ENCODE measurements at regions of chr20 and their contacts with region 1.

Region 1: DNA sequence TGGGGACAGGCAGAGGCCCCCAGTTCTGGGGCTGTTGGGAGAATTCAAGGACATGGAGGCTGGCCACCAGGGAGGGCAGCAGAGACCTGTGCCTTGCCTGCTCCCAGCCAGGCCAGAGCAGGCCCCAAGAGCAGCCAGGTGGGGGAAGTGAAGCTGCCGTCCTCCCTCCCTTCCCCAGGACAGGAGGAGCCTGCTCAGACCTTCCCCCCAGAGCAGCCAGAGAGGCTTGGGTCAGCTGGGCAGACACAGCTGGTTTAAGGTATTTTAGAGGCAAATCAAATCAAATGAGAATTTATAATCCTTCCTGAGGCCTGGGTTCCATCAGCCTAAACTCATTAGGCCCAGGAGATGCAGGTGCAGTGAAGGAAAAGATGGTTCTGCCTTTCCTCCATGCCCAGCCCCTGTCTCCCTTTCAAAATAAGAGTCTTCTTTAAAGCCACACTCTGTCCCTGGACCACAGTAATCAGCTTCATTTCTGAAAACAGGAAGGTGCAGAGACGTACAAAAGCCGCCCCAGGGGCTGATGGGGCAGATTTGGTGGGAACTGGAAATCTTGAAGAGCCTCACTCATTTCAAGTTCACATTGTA is 21.7 kb downstream of the BMP7 start:
- DNase-seq: peak in 1 of 2 experiments; percentile 57
- H3K4me3 ChIP-seq: no peak overlapping the region
- H3K27ac ChIP-seq: no peak overlapping the region
- H3K4me1 ChIP-seq: peaks cover 0 to 8% (median 2%) of the 10 kb centered on the region in 4 experiments; a peak in 3 of 7 replicates
- H3K27me3 ChIP-seq: no peaks in the 10 kb centered on the region
- CTCF ChIP-seq: peak; percentile 42 to 66 (median 57)
- EP300 ChIP-seq: no peak
- POLR2A ChIP-seq: no peak
- RAD21 ChIP-seq: peak; percentile 63 to 71; a peak in 3 of 4 replicates

Region 2: GRCh38 chr20:57211959-57212895 is 32.5 kb before region 1 on chr20:
- CTCF ChIA-PET with region 1: interaction called, 12 read pairs
- POLR2A ChIA-PET with region 1: no interaction called
- DNase-seq: peak; percentile 34 to 75
- H3K4me3 ChIP-seq: peak overlapping the region in 2 of 4 experiments; percentile 19 to 38; a peak in 3 of 8 replicates
- H3K27ac ChIP-seq: peak overlapping the region; percentile 56
- H3K4me1 ChIP-seq: peaks cover 0 to 28% (median 15%) of the 10 kb centered on the region in 4 experiments; a peak in 6 of 7 replicates
- H3K27me3 ChIP-seq: peaks cover 0 to 5% (median 2%) of the 10 kb centered on the region in 4 experiments; a peak in 2 of 7 replicates
- CTCF ChIP-seq: no peak
- EP300 ChIP-seq: no peak
- POLR2A ChIP-seq: no peak; a peak in 1 of 3 replicates
- RAD21 ChIP-seq: no peak

Region 3: DNA sequence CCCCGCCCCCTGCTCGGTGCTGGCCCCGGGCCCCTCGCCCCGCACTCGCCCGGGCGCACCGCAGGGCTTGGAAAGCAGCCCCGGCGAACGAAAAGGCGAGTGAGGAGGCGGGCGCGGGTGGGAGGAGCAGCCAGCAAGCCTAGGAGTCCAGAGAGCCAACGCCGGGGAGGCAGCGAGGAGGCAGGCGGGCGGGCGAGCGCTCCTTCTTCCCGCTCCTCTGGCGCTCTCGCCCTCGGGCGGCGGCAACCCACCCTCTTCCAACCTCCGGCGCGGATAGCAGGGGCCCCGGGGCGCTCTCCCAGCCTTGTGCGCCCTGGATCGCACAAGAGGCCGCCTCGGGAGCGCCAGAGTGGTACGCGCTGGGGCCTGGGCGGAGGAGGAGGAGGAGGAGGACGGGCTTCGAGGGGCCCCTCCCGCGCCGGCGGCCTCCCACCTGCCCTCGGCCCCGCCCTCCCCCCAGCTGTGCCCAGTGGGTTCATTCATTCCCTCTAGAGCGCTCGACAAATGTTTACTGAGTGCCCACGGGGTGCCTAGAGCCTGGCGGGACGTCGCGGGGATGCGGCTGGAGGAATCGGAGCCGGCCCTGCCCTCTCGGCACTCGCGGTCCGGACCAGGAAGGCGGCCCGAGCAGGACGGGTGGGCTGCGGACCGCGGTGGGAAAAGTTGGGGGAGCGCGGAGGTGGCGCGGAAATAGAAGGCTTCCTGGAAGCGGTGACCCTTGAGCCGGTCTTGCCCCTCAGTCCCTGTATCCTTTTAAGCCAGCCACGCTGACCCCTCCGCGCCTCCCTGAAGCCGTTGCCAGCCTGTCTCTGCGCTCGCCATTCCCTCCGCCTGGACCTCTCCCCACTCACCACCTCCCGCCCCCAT is 21.8 kb after region 1 on chr20 and contains the start of gene BMP7:
- CTCF ChIA-PET with region 1: interaction called, 33 read pairs
- POLR2A ChIA-PET with region 1: no interaction called
- DNase-seq: peak in 1 of 2 experiments; percentile 87
- H3K4me3 ChIP-seq: peak within 1 kb of the TSS; percentile 65 to 78 (median 74)
- H3K27ac ChIP-seq: no peak within 1 kb of the TSS
- H3K4me1 ChIP-seq: peaks cover 23 to 46% (median 39%) of the 10 kb centered on the region in 4 experiments
- H3K27me3 ChIP-seq: peaks cover 33 to 83% (median 75%) of the 10 kb centered on the region in 4 experiments
- CTCF ChIP-seq: no peak
- EP300 ChIP-seq: no peak
- POLR2A ChIP-seq: no peak
- RAD21 ChIP-seq: no peak
- total RNA-seq, gene BMP7: 7.2 and 9.2 TPM in 2 replicates

Region 4: DNA sequence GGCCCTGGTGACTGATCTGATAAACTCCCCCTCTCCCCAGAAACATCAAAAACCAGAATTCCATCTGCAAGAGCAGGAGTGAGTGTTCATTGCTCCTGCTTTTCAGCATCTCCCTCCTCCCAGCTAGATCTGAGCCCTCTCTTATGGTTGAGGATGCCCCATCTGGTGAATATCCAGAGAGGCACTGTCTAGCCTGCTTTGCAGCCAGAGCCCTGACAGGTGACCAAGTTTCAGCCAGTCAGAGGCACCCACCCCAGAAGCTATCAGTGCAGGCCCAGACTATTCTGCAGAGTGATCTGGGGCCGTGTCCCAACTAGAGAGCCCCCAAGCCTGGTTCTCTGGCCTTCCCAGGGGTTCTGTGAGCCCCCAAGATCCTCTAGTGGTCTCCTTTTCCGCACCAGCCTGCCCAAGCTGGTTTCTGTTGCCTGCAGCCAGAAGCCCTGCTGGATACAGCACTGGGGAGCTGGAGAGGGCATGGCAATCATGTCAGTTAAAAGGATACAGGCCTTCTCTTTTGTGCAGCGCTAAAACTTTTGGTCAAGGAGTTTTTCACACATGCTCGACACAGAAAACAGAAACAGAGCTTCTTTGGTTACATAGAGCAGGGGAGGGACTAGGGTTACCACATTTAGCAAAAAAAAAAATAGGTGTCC is 28.3 kb after region 1 on chr20:
- CTCF ChIA-PET with region 1: interaction called, 12 read pairs
- POLR2A ChIA-PET with region 1: no interaction called
- DNase-seq: no peak
- H3K4me3 ChIP-seq: no peak overlapping the region
- H3K27ac ChIP-seq: no peak overlapping the region
- H3K4me1 ChIP-seq: peaks cover 7 to 21% (median 13%) of the 10 kb centered on the region in 4 experiments; a peak in 6 of 7 replicates
- H3K27me3 ChIP-seq: peaks cover 9 to 34% (median 27%) of the 10 kb centered on the region in 4 experiments
- CTCF ChIP-seq: no peak
- EP300 ChIP-seq: no peak
- POLR2A ChIP-seq: no peak
- RAD21 ChIP-seq: peak in 1 of 2 experiments; percentile 10; a peak in 2 of 4 replicates

Region 5: DNA sequence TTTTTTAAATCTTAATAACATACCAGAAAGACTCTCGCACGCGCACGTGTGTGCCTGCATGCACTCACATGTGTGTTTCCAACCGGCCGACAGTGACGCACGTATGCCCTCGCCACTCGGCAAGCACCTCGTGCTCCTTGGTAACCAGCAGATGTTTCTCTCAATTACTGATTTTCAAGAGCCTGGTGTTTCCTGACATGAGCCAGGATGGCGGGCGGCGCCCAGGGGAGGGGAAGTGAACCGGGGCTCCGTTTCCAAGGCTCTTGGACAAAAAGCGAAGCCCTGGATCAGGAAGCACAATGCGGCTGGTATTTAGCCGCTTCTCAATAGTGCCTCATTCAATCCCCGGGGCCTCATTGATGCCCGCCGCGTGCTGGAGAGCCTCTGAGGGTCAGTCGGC is 427.4 kb after region 1 on chr20:
- CTCF ChIA-PET with region 1: no interaction called
- POLR2A ChIA-PET with region 1: no interaction called
- DNase-seq: no peak
- H3K4me3 ChIP-seq: no peak overlapping the region
- H3K27ac ChIP-seq: no peak overlapping the region
- H3K4me1 ChIP-seq: peaks cover 3 to 22% (median 7%) of the 10 kb centered on the region in 4 experiments
- H3K27me3 ChIP-seq: no peaks in the 10 kb centered on the region
- CTCF ChIP-seq: no peak
- EP300 ChIP-seq: no peak
- POLR2A ChIP-seq: no peak
- RAD21 ChIP-seq: no peak

Measured in H1 (cell line).